Activated CD4-positive, alpha-beta memory T cell treated with anti-CD3 and anti-CD28 coated beads for 36 hours (primary cell): ENCODE measurements at regions of chr4 and their contacts with region 1.

Region 1: GRCh38 chr4:8241895-8242696 is 27.5 kb upstream of the HTRA3 start:
- DNase-seq: peak; percentile 86
- H3K4me3 Mint-ChIP-seq: no peak overlapping the region
- H3K27ac Mint-ChIP-seq: no peak overlapping the region
- H3K4me1 Mint-ChIP-seq: peaks cover 9% of the 10 kb centered on the region
- H3K27me3 Mint-ChIP-seq: no peaks in the 10 kb centered on the region

Region 2: GRCh38 chr4:8176547-8177399 is 65.3 kb before region 1 on chr4:
- CTCF ChIA-PET with region 1: interaction called, 13 read pairs
- POLR2A ChIA-PET with region 1: no interaction called
- intact Hi-C with region 1: loop called (anchors 1 kb)
- DNase-seq: peak; percentile 64
- H3K4me3 Mint-ChIP-seq: no peak overlapping the region
- H3K27ac Mint-ChIP-seq: no peak overlapping the region
- H3K4me1 Mint-ChIP-seq: peaks cover 5% of the 10 kb centered on the region
- H3K27me3 Mint-ChIP-seq: peaks cover under 1% of the 10 kb centered on the region

Region 3: DNA sequence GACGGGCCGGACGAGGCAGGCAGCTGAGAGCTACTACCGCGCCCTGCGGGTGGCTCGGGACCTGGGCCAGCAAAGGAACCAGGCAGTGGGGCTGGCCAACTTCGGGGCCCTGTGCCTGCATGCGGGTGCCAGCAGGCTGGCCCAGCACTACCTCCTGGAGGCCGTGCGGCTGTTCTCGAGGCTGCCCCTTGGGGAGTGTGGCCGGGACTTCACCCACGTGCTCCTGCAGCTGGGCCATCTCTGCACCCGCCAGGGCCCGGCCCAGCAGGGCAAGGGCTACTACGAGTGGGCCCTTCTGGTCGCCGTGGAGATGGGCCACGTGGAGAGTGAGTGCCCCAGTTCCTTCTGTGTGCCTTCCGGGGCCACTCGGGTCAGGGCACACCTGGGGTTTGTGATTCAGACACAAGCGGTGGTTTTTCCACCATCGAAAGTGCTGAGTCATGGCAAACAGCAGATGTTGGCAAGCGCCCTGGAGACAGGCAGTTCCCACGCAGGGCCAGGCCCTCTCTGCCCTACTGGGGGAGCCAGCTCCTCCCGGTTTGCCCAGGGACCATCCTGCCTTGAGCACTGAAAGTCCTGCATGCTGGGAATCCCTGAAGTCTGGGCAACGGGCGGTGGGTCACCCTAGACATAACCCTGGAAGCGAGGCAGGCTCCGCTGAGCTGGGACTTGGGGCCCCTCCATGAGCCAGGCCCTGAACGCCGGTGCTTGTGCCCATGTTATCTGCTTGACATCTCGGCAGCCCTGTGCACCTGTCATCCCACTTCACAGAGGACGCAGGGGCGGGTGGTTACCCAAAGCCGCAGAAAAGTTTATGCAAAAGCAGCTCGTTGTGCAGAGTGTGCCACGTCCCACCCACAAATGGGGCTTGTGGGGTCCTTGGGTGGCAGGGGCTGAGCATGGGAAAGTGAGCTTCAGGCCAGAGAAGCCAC is 13.5 kb before region 1 on chr4:
- CTCF ChIA-PET with region 1: interaction called, 11 read pairs
- POLR2A ChIA-PET with region 1: no interaction called
- intact Hi-C with region 1: no loop called
- DNase-seq: peak; percentile 94
- H3K4me3 Mint-ChIP-seq: no peak overlapping the region
- H3K27ac Mint-ChIP-seq: peak overlapping the region; percentile 66
- H3K4me1 Mint-ChIP-seq: peaks cover 25% of the 10 kb centered on the region
- H3K27me3 Mint-ChIP-seq: no peaks in the 10 kb centered on the region

Region 4: GRCh38 chr4:8267077-8267476 is 25.0 kb after region 1 on chr4:
- CTCF ChIA-PET with region 1: interaction called, 6 read pairs
- POLR2A ChIA-PET with region 1: no interaction called
- intact Hi-C with region 1: loop called (anchors 1 kb)
- DNase-seq: peak; percentile 58
- H3K4me3 Mint-ChIP-seq: no peak overlapping the region
- H3K27ac Mint-ChIP-seq: no peak overlapping the region
- H3K4me1 Mint-ChIP-seq: no peaks in the 10 kb centered on the region
- H3K27me3 Mint-ChIP-seq: peaks cover 29% of the 10 kb centered on the region

Region 5: GRCh38 chr4:8403173-8403753 is 161.2 kb after region 1 on chr4:
- CTCF ChIA-PET with region 1: interaction called, 24 read pairs
- POLR2A ChIA-PET with region 1: no interaction called
- intact Hi-C with region 1: loop called (anchors 1 kb)
- DNase-seq: peak; percentile 63
- H3K4me3 Mint-ChIP-seq: no peak overlapping the region
- H3K27ac Mint-ChIP-seq: no peak overlapping the region
- H3K4me1 Mint-ChIP-seq: no peaks in the 10 kb centered on the region
- H3K27me3 Mint-ChIP-seq: no peaks in the 10 kb centered on the region

Region 6: GRCh38 chr4:8594097-8595038 is 352.3 kb after region 1 on chr4:
- CTCF ChIA-PET with region 1: interaction called, 5 read pairs
- POLR2A ChIA-PET with region 1: no interaction called
- intact Hi-C with region 1: loop called (anchors 5 kb)
- DNase-seq: peak; percentile 31
- H3K4me3 Mint-ChIP-seq: no peak overlapping the region
- H3K27ac Mint-ChIP-seq: no peak overlapping the region
- H3K4me1 Mint-ChIP-seq: no peaks in the 10 kb centered on the region
- H3K27me3 Mint-ChIP-seq: peaks cover 24% of the 10 kb centered on the region

Region 7: GRCh38 chr4:8886612-8887406 is 644.7 kb after region 1 on chr4:
- CTCF ChIA-PET with region 1: no interaction called
- POLR2A ChIA-PET with region 1: no interaction called
- intact Hi-C with region 1: no loop called
- DNase-seq: no peak
- H3K4me3 Mint-ChIP-seq: no peak overlapping the region
- H3K27ac Mint-ChIP-seq: no peak overlapping the region
- H3K4me1 Mint-ChIP-seq: no peaks in the 10 kb centered on the region
- H3K27me3 Mint-ChIP-seq: peaks cover 38% of the 10 kb centered on the region